Naive thymus-derived CD4-positive, alpha-beta T cell (primary cell): ENCODE measurements at regions of chr3 and their contacts with region 1.

Region 1: DNA sequence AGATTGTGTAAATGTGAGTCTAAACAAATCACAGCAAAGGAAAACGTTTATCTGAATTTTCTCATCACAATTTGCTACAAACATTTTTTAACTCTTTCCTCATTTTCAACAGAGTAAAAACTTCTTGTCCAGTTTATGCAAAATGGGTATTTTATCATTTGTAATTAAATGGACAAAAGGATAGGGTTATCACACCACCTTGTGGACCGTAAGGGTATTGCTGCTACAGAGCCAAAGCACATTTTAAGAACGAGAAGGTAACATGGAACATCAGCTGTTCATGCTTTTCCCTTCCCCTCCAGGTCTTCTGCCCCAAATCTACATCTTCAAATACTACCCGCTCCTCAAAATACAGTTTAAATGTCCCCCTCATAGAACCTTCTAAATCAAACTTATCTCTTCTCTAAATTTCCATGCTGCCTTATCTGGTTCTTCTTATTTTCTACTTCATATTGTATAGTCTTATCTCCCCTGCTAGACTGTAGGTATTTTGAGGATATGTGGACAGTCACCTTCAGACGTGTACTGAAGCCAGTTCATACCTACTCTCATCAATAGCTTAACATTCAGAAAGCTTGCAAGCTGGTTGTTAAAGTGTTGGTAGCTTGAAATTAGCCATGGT is 12.8 kb upstream of the SETMAR start:
- DNase-seq: peak in 5 of 9 donors; percentile 31 to 47 (median 39)
- ATAC-seq: peak; percentile 84
- H3K4me3 ChIP-seq: no peak overlapping the region
- H3K4me3 Mint-ChIP-seq: no peak overlapping the region
- H3K27ac ChIP-seq: no peak overlapping the region
- H3K27ac Mint-ChIP-seq: peak overlapping the region in 2 of 9 donors; percentile 7 to 10
- H3K4me1 ChIP-seq: peaks cover 0 to 4% of the 10 kb centered on the region in 2 donors
- H3K4me1 Mint-ChIP-seq: peaks cover 2 to 34% (median 17%) of the 10 kb centered on the region in 7 donors
- H3K27me3 ChIP-seq: no peaks in the 10 kb centered on the region
- H3K27me3 Mint-ChIP-seq: peaks cover 0 to 27% (median 0%) of the 10 kb centered on the region in 5 donors

Region 2: DNA sequence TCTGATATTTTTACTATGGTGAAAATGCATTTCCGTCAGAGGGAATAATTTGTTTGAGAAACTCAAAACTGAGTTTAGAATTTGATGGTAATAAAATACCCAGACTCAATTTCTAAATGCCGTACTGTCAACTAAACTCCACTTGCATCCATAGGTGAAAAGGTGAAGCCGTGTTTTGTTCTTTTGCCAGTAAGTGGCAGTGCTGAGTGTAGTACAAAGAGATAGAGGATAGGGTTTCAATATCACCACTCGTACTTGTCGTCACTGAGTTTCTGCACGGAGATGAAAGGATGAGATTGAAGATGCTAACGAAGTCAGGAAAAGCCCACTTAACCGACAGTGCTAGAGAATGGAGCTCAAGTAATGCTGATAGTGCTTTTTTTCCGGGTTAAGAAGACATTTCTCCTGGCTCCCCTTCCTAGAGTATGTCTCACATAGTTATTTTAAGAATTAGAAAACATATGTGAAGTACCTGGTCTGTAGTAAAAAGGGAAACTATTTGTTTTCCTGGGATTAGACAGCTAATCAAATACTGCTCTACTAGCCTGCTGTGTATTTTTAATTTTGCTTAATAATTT is 1525.3 kb before region 1 on chr3:
- CTCF ChIA-PET with region 1: interaction called, 3 read pairs
- POLR2A ChIA-PET with region 1: no interaction called
- intact Hi-C with region 1: loop called in 1 of 2 experiments (anchors 5 kb)
- DNase-seq: peak in 5 of 9 donors; percentile 2 to 32 (median 17)
- ATAC-seq: peak; percentile 73
- H3K4me3 ChIP-seq: no peak overlapping the region
- H3K4me3 Mint-ChIP-seq: peak overlapping the region in 4 of 10 donors; percentile 47 to 63 (median 51)
- H3K27ac ChIP-seq: no peak overlapping the region
- H3K27ac Mint-ChIP-seq: no peak overlapping the region
- H3K4me1 ChIP-seq: no peaks in the 10 kb centered on the region
- H3K4me1 Mint-ChIP-seq: peaks cover 0 to 4% (median 0%) of the 10 kb centered on the region in 7 donors
- H3K27me3 ChIP-seq: peaks cover 0 to 3% of the 10 kb centered on the region in 2 donors
- H3K27me3 Mint-ChIP-seq: peaks cover 0 to 12% (median 7%) of the 10 kb centered on the region in 5 donors

Region 3: GRCh38 chr3:3200632-3201212 is 1089.7 kb before region 1 on chr3:
- CTCF ChIA-PET with region 1: interaction called, 45 read pairs
- POLR2A ChIA-PET with region 1: no interaction called
- intact Hi-C with region 1: loop called (anchors 1 kb)
- DNase-seq: peak in 5 of 9 donors; percentile 7 to 39 (median 28)
- ATAC-seq: peak; percentile 71
- H3K4me3 ChIP-seq: no peak overlapping the region
- H3K4me3 Mint-ChIP-seq: peak overlapping the region in 6 of 10 donors; percentile 36 to 76 (median 51)
- H3K27ac ChIP-seq: no peak overlapping the region
- H3K27ac Mint-ChIP-seq: peak overlapping the region in 1 of 9 donors; percentile 58
- H3K4me1 ChIP-seq: no peaks in the 10 kb centered on the region
- H3K4me1 Mint-ChIP-seq: peaks cover 8 to 27% (median 19%) of the 10 kb centered on the region in 7 donors
- H3K27me3 ChIP-seq: no peaks in the 10 kb centered on the region
- H3K27me3 Mint-ChIP-seq: peaks cover 0 to 8% (median 0%) of the 10 kb centered on the region in 5 donors

Region 4: DNA sequence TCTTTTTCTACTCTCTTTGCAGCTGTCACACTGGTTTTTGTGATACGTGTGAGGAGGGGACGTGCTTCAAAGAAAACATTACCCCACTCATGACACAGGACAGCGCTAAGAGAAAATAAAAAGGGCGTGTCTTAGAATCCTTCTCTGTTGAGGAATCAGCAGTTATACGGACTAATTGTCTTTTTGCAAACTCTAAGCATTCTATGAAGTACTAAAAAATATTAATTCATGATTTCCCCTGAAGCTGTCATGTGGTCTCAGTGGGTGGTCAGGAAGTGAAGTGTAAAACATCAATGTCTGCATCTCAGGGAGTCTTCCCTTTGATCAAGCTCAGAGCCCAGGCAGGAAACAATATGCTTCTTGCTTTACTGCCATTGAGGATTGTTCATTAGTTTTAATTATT is 993.4 kb before region 1 on chr3:
- CTCF ChIA-PET with region 1: interaction called, 3 read pairs
- POLR2A ChIA-PET with region 1: no interaction called
- intact Hi-C with region 1: loop called in 1 of 2 experiments (anchors 10 kb)
- DNase-seq: peak in 7 of 9 donors; percentile 12 to 60 (median 48)
- ATAC-seq: peak; percentile 76
- H3K4me3 ChIP-seq: no peak overlapping the region
- H3K4me3 Mint-ChIP-seq: peak overlapping the region; percentile 48 to 85 (median 74)
- H3K27ac ChIP-seq: peak overlapping the region; percentile 45
- H3K27ac Mint-ChIP-seq: peak overlapping the region in 8 of 9 donors; percentile 66 to 93 (median 83)
- H3K4me1 ChIP-seq: peaks cover 0 to 12% of the 10 kb centered on the region in 2 donors
- H3K4me1 Mint-ChIP-seq: peaks cover 7 to 44% (median 30%) of the 10 kb centered on the region in 7 donors
- H3K27me3 ChIP-seq: no peaks in the 10 kb centered on the region
- H3K27me3 Mint-ChIP-seq: peaks cover 0 to 3% (median 0%) of the 10 kb centered on the region in 5 donors

Region 5: DNA sequence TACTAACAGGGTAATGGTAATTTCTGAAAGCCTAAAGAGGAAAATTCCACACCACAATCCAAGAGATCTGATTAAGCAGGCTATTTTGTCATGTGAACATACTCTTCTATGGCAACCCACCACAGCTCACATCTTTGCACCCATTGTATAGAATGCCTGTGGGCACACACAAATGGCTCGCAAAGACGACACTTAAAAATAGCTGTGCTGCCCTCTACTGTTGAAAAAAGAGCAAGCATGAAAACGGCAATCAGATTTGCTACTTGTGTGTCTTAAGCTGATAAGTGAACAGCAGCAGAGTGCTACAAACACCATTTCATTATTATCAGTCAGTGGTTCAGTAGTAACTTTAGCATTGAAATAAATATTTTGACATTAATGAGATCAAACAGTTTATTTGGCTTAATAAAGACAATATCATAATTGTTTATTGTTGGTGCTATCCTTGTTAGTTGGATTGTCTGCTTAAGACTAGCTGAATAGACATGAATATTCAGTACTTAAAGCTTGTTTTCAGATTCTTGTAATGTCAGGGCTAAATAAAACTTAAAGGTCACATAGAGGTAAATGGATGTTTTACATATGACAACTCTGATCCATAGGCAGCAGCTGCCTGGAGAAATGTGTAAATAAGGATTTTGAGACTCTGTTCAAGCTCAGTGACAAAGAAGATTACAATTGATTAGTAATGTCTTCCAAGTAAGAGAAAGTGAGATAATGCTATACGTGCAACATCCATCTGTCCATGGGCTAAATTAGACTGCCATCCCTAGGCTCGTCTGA is 292.1 kb before region 1 on chr3:
- CTCF ChIA-PET with region 1: no interaction called
- POLR2A ChIA-PET with region 1: no interaction called
- intact Hi-C with region 1: loop called in 1 of 2 experiments (anchors 1 kb)
- DNase-seq: peak in 5 of 9 donors; percentile 11 to 39 (median 24)
- ATAC-seq: peak; percentile 46
- H3K4me3 ChIP-seq: no peak overlapping the region
- H3K4me3 Mint-ChIP-seq: no peak overlapping the region
- H3K27ac ChIP-seq: no peak overlapping the region
- H3K27ac Mint-ChIP-seq: no peak overlapping the region
- H3K4me1 ChIP-seq: no peaks in the 10 kb centered on the region
- H3K4me1 Mint-ChIP-seq: no peaks in the 10 kb centered on the region
- H3K27me3 ChIP-seq: no peaks in the 10 kb centered on the region
- H3K27me3 Mint-ChIP-seq: peaks cover 0 to 3% (median 0%) of the 10 kb centered on the region in 5 donors